ENCODE measurements at regions of chr1 and their contacts with region 1.

Region 1: GRCh38 chr1:28091043-28091781 is 2.8 kb upstream of the EYA3 start:
- DNase-seq: peak in 2 of 3 donors; percentile 79 to 90
- ATAC-seq: peak; percentile 56
- H3K4me3 ChIP-seq: no peak overlapping the region
- H3K4me1 ChIP-seq: peaks cover 18% of the 10 kb centered on the region
- CTCF ChIP-seq: peak; percentile 71

Region 2: DNA sequence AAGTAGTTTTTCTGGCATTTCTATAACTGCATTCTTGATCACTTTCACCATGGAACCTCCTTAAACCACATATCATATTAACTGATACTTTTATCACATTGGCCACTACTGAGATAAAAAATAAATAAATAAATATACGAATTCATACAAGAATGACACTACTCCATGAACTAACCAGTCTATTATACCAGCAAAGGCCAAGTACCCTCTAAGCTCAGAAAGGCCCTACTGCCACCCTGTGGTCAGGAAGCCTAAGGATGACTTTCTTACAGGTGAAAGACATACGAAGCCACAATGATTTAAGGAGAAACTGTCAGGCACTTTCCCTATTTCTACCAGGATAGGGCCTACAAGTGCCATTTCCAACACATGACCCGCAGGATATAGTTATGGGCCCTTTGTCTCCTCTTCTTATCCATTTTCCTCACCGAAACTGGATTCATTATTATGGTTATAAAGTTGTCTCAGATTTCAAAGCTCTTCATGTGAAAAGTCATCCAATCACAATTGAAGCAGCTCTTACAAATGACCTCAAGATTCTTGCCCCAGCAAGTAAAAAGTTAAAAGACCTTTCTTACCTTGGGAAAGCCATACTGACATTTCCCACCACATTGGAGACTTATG is 117.7 kb after region 1 on chr1:
- intact Hi-C with region 1: loop called in 1 of 2 experiments (anchors 2 kb)
- DNase-seq: peak in 2 of 3 donors; percentile 53 to 85
- ATAC-seq: peak; percentile 91
- H3K4me3 ChIP-seq: no peak overlapping the region
- H3K4me1 ChIP-seq: no peaks in the 10 kb centered on the region
- CTCF ChIP-seq: peak; percentile 53